Activated T-helper 1 cell treated with anti-CD3 and anti-CD28 coated beads, Interleukin-12 subunit alpha, Interleukin-12 subunit beta, Interleukin-2, Interleukin-4 antibody, amounts not matched to agents 30 ng/mL and 10 ng/mL and 1 ng/mL, durations not matched to agents 14 hours and 24 hours and 36 hours (primary cell): ENCODE measurements at regions of chr15 and their contacts with region 1.

Region 1: GRCh38 chr15:43285609-43286037 is 18.9 kb upstream of the TGM5 start:
- DNase-seq: peak; percentile 44
- H3K4me3 Mint-ChIP-seq: no peak overlapping the region
- H3K27ac Mint-ChIP-seq: no peak overlapping the region
- H3K4me1 Mint-ChIP-seq: peaks cover 5% of the 10 kb centered on the region
- H3K27me3 Mint-ChIP-seq: peaks cover 6% of the 10 kb centered on the region

Region 2: DNA sequence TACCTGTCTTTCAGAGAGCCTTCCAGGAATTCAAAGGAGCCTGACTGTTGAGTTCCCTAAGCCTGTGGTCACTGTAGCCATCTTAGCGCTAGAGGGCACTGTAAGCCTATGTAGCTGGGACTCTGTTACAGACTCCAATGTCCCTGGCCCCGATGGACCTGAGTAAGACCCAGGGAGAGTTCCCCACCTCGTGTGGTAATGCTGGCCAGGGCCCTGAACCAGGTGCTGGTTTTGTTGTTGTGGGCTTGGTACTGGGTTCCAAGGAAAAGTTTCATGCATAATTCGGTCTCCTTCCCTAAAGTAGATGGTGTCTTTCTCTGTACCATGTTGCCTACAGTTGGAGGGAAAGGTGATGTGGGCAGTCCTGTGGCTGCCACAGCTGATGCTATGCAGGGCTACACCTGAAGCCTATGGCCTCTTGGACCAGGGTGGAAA is 581.1 kb before region 1 on chr15:
- intact Hi-C with region 1: loop called (anchors 10 kb)
- DNase-seq: peak; percentile 45
- H3K4me3 Mint-ChIP-seq: no peak overlapping the region
- H3K27ac Mint-ChIP-seq: no peak overlapping the region
- H3K4me1 Mint-ChIP-seq: peaks cover 6% of the 10 kb centered on the region
- H3K27me3 Mint-ChIP-seq: no peaks in the 10 kb centered on the region

Region 3: GRCh38 chr15:43225201-43225949 is 60.2 kb before region 1 on chr15:
- intact Hi-C with region 1: loop called (anchors 1 kb)
- DNase-seq: peak; percentile 36
- H3K4me3 Mint-ChIP-seq: no peak overlapping the region
- H3K27ac Mint-ChIP-seq: no peak overlapping the region
- H3K4me1 Mint-ChIP-seq: peaks cover 8% of the 10 kb centered on the region
- H3K27me3 Mint-ChIP-seq: peaks cover 16% of the 10 kb centered on the region